Right cardiac atrium (tissue), 5 donors: ENCODE measurements at regions of chr6 and their contacts with region 1.

Region 1: GRCh38 chr6:107989166-107990094 is 31.4 kb upstream of the SEC63 start:
- DNase-seq: no peak
- ATAC-seq: no peak
- H3K4me3 ChIP-seq: no peak overlapping the region
- H3K27ac ChIP-seq: no peak overlapping the region
- H3K4me1 ChIP-seq: no peaks in the 10 kb centered on the region
- H3K27me3 ChIP-seq: no peaks in the 10 kb centered on the region

Region 2: DNA sequence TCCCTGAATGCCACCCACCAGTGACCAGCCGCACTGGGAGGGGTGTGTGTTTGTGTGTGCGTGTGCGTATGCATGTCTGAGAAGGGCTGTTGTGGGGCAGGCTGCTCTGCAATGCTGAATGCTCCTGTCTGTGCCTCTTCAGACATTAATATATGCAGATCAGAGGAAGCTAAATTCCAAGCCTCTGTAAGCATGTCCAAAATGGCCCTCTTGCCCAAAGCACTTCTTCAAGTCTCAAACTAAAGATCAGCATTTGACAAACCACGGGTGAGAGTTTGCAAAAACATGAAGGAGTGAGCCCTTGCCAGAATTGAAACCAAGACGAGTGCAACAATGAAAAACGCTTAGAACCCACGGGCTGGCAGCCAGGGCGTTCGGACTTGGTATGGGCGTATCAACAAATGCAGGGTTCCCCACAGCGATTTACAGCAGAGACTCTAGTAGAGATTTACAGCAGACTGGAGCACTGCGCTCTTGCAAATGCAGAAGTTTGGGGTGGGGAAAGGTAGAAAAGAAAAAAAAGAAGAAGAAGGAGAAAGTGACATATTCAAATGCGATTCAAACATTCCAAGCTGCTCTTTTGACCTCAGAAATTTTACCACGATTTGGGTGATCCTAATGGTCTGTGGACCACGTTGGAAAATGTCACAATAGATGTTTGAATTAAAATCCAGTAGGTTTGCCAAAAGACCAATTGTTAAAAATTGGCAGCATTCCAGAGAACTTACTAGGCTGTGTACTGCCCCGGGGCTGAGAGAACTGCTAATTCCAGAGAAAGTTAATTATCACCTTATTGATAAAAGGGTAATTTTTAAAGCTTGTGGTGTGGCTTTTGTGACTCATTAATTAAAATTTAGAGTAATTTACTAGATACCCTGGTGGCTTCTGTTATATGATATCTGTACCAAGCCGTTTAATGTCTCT is 168.8 kb before region 1 on chr6:
- intact Hi-C with region 1: no loop called
- DNase-seq: peak in 1 of 3 donors; percentile 56
- ATAC-seq: peak; percentile 37 to 45
- H3K4me3 ChIP-seq: peak overlapping the region; percentile 34
- H3K27ac ChIP-seq: no peak overlapping the region
- H3K4me1 ChIP-seq: no peaks in the 10 kb centered on the region
- H3K27me3 ChIP-seq: no peaks in the 10 kb centered on the region

Region 3: DNA sequence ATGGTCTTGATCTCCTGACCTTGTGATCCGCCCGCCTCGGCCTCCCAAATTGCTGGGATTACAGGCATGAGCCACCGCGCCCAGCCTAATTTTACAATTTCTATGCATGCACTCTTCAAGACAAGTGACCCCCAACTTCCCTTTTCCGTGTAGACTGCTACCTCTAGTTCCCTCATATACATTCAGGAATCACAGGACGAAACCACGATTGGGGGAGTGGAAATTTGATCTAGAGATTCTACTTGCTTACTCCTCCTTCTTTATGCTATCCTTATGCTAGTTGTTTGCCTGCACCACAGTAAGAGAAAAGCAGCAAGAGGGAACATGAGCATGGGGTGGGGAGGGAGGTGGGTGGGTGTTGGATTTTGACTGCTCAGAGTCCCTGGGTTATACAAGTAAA is 50.3 kb after region 1 on chr6:
- intact Hi-C with region 1: loop called in 1 of 4 experiments (anchors 10 kb)
- DNase-seq: no peak
- ATAC-seq: no peak
- H3K4me3 ChIP-seq: no peak overlapping the region
- H3K27ac ChIP-seq: no peak overlapping the region
- H3K4me1 ChIP-seq: no peaks in the 10 kb centered on the region
- H3K27me3 ChIP-seq: no peaks in the 10 kb centered on the region